Activated naive CD4-positive, alpha-beta T cell treated with anti-CD3 and anti-CD28 coated beads, Interleukin-2, amount 10 ng/mL, durations not matched to agents 7 days and 5 days (primary cell): ENCODE measurements at regions of chr15 and their contacts with region 1.

Region 1: GRCh38 chr15:59492389-59493377 is 54.7 kb downstream of the FAM81A start:
- DNase-seq: peak; percentile 70
- H3K4me3 Mint-ChIP-seq: no peak overlapping the region
- H3K27ac Mint-ChIP-seq: no peak overlapping the region
- H3K4me1 Mint-ChIP-seq: no peaks in the 10 kb centered on the region
- H3K27me3 Mint-ChIP-seq: peaks cover 12% of the 10 kb centered on the region

Region 2: DNA sequence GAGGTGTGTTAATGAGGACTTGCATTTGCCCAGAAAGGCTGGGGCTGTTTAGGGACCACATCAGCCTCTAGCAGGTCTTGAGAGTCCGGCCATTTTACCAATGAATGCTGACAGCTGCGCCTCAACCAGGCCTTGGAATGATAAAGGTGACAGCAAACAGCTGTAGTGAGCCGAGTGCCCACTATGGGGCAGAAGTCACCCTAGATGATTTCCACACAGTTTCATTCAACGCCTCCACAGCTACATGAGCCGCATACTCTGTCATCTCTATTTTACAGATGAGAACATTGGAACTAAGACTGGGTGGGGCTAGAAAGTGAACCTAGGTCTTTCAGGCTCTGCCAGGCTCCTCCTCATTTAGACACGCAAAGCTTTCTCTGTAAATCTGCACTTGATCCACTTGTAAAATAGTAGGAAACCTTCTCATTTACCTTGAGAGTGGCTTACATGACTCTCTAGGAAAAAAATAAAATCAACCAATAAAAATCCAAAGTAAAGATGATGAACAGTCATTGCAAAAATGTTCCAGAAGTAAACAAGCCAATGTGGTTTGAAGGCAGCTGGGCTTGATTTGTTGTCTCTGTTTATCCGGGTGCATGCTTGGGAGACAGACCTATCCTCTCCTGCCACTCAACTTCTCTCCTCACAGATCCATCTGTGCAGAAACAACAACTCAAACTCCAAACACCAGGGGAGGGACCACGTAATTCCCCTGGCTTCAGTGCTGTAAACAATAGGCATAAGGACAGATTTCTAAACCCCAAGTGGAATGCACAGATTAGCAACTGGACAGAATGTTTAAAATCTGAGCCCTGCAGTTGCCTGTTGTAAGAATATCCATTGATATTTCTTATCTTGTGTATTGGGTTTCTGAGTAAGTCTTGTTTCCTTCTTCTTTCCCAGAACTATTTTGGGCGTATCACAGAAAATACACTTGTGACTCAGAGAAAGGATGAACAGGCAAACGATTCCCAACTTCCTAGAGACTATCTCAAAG is 317.6 kb before region 1 on chr15:
- CTCF ChIA-PET with region 1: interaction called, 19 read pairs
- DNase-seq: peak; percentile 64
- H3K4me3 Mint-ChIP-seq: no peak overlapping the region
- H3K27ac Mint-ChIP-seq: no peak overlapping the region
- H3K4me1 Mint-ChIP-seq: peaks cover 16% of the 10 kb centered on the region
- H3K27me3 Mint-ChIP-seq: peaks cover 33% of the 10 kb centered on the region

Region 3: DNA sequence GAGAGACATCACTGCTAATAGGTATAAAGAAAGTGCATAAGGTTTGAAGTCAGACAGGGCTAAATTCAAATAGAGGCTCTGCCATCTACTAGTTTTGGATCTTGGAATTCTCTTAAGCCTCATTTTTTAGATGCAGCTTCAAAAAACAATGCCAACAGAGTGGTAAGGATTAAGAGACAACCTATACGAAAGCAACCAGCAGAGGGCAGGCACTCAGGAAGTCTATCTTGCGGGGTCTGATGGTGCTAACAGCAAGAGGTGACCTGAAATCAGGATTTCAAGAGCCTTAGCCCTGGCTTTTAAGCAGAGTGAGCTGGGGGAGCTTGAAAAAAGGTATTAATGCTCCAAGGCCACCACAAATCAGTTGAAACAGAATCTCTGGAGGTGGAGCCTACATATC is 245.3 kb before region 1 on chr15:
- CTCF ChIA-PET with region 1: interaction called, 32 read pairs
- DNase-seq: peak; percentile 80
- H3K4me3 Mint-ChIP-seq: no peak overlapping the region
- H3K27ac Mint-ChIP-seq: no peak overlapping the region
- H3K4me1 Mint-ChIP-seq: peaks cover 11% of the 10 kb centered on the region
- H3K27me3 Mint-ChIP-seq: peaks cover 12% of the 10 kb centered on the region

Region 4: DNA sequence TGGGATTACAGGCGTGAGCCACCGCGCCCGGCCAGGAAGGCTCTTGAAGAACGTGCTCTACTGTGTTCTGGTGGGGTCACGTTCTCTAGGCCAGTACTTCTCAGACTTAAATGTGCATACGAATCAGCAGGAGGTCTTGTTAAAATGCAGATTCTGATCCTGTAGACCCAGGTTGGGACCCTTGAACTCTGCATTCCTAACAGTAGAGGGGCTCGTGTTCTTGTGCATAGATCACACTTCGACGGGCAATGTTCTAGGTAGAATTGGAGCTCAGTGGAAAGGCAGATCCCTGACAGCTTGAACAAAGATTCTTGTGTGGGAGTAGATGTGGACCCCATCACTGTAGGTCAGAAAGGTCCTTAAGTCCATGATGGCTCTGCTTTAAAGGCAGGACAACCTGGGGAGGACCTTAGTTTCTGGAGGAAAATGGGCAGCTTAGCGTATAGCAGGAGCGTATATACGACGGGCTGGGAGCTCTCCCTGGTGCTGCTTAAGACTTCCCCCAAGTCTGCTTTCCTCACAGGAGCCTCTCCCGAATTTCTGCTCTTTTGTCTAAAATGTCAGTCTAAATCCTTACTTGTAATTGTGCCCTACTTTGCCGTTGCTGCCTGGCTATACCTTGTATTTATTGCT is 71.6 kb before region 1 on chr15:
- CTCF ChIA-PET with region 1: no interaction called
- DNase-seq: no peak
- H3K4me3 Mint-ChIP-seq: no peak overlapping the region
- H3K27ac Mint-ChIP-seq: no peak overlapping the region
- H3K4me1 Mint-ChIP-seq: peaks cover 11% of the 10 kb centered on the region
- H3K27me3 Mint-ChIP-seq: peaks cover 42% of the 10 kb centered on the region